SK-N-SH (cell line): ENCODE measurements at regions of chr11 and their contacts with region 1.

Region 1: DNA sequence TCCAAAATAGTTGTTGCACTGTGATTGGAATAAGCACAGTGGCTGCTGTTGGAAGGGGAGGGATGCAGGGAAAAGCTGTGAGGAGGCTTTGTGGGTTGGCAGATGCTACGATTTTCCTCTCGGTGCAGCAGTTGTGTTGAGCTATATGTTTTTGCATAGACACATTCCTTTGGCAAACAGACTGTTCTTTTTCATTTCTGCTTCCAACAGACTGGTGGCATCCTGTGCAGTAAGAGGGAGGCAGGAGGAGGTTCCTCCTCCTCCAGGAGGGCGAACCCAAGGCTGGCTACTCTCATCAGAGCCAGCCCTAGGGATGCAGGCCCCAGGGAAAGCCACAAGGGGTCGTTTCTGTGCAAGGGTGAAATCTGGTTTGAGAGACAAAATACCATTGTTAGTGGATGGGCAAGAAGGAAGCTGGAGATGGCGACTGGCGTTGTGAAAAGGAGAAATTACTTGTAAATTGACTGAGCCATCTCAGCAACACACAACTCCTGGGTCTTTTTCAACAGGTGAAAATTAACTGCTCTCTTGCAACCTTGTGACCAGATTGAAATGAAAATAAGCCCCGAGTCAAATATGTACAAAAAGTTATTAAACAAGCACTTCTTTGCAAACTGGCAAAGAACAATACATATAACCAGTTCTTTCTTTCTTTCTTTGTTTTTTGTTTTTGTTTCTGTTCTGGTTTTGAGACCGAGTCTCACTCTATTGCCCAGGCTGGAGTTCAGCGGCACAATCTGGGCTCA is 26.5 kb upstream of the UBASH3B start:
- DNase-seq: peak; percentile 82
- H3K4me3 ChIP-seq: no peak overlapping the region
- H3K27ac ChIP-seq: peak overlapping the region in 1 of 2 experiments; percentile 34; a peak in 2 of 4 replicates
- H3K4me1 ChIP-seq: no peaks in the 10 kb centered on the region; a peak in 2 of 4 replicates
- H3K27me3 ChIP-seq: no peaks in the 10 kb centered on the region
- CTCF ChIP-seq: peak; percentile 86
- EP300 ChIP-seq: no peak
- RAD21 ChIP-seq: peak; percentile 84

Region 2: DNA sequence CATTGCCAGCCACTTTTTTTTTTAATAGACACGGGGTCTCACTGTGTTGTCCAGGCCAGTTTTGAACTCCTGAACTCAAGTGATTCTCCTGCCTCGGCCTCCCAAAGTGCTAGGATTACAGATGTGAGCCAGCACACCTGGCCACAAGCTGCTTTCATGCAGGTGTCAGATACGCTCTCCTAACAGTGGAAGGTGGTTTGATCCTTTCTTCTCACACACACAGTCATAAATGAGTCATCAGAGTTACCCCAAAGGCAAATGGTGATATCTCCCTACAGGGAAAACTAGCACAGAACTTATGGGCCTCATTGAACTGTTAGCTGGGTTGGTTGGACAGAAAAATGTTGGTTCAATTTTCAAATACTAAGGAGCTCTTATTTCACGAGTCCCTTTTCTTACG is 11.7 kb before region 1 on chr11:
- CTCF ChIA-PET with region 1: interaction called, 15 read pairs
- POLR2A ChIA-PET with region 1: no interaction called
- DNase-seq: no peak
- H3K4me3 ChIP-seq: no peak overlapping the region
- H3K27ac ChIP-seq: no peak overlapping the region
- H3K4me1 ChIP-seq: no peaks in the 10 kb centered on the region
- H3K27me3 ChIP-seq: no peaks in the 10 kb centered on the region
- CTCF ChIP-seq: no peak
- EP300 ChIP-seq: no peak
- RAD21 ChIP-seq: no peak

Region 3: GRCh38 chr11:122754553-122755322 is 125.8 kb after region 1 on chr11:
- CTCF ChIA-PET with region 1: interaction called, 10 read pairs
- POLR2A ChIA-PET with region 1: no interaction called
- DNase-seq: no peak
- H3K4me3 ChIP-seq: no peak overlapping the region
- H3K27ac ChIP-seq: no peak overlapping the region
- H3K4me1 ChIP-seq: peaks cover 14 to 19% of the 10 kb centered on the region in 2 experiments; a peak in 3 of 4 replicates
- H3K27me3 ChIP-seq: no peaks in the 10 kb centered on the region
- CTCF ChIP-seq: peak; percentile 56
- EP300 ChIP-seq: no peak
- RAD21 ChIP-seq: peak; percentile 44

Region 4: DNA sequence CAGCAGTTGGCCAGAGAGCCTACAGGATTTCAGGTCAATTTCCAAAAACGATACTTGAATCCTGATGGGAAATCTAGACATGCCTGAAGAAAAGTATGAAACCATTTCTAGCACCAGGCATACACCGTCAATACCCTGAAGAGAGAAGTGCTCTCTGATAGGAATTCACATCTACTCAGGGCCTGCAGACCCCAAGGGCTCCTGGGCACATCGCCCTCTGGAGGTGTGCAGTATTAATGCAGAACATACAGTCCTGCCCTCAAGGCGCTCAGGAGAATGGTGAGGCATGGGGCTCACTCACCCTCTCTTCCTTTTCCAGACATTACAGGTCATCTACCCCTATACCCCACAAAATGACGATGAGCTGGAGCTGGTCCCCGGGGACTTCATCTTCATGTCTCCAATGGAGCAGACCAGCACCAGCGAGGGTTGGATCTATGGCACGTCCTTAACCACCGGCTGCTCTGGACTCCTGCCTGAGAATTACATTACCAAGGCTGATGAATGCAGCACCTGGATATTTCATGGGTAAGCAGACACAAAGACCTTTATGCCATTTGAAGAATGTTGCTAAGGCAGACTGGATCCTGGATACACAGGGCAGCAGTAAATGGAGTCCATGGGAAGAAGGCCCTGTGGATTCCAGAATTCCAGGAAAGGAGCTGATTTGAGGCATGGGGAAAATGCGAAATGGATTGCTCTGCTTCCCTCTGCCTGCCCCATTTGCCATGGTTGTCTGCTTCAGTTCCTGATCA is 160.0 kb after region 1 on chr11:
- CTCF ChIA-PET with region 1: interaction called, 99 read pairs
- POLR2A ChIA-PET with region 1: no interaction called
- DNase-seq: no peak
- H3K4me3 ChIP-seq: no peak overlapping the region
- H3K27ac ChIP-seq: no peak overlapping the region
- H3K4me1 ChIP-seq: peaks cover 0 to 24% of the 10 kb centered on the region in 2 experiments; a peak in 3 of 4 replicates
- H3K27me3 ChIP-seq: no peaks in the 10 kb centered on the region
- CTCF ChIP-seq: peak; percentile 48
- EP300 ChIP-seq: no peak
- RAD21 ChIP-seq: no peak